Gastrocnemius medialis (tissue), 4 donors: ENCODE measurements at regions of chr6 and their contacts with region 1.

Region 1: DNA sequence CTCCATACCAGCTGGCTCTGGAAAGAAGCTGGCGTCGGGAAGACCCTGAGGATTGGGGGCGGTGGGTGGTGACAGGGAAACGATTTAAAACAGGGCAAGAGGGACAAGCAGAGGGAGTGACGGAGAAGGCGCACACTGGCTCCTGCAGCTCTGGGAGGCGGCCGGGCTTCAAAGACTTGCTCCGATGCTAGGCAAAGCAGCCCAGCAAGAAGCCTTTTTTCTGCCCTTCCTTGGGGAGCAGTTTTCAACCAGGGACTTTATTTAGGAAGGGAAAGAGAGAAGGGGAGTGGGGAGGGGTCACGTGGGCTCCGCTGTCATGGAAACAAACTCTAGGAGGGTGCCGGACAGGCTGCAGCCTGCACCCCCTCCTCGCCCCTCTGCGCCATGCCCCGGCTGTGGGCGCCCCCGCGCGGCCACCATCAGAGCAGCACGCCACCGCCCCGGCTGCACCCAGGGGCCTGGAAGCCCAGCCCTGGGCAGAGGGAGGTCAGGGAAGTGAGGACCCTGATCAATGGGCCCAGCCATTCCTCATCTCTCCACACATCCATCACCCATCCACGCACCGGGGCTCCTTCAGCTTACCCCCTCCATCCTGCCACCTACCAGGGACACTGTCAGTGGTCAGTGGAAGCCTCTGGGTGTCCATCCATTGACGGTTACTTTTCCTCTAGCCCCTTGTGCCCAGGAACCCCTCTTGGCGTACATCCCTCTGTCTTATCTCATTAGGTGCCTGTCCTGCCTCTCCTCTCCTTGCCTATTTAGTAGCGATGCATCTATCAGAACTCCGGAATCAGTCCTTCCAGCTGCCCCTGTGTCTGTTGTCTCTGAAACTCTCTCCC is 66.6 kb upstream of the CCDC167 start:
- DNase-seq: no peak
- ATAC-seq: peak in 1 of 2 donors; percentile 33
- H3K4me3 ChIP-seq: peak overlapping the region; percentile 18 to 54 (median 33)
- H3K27ac ChIP-seq: no peak overlapping the region
- H3K4me1 ChIP-seq: peaks cover 3 to 6% of the 10 kb centered on the region in 2 donors
- H3K27me3 ChIP-seq: peaks cover 8 to 18% (median 13%) of the 10 kb centered on the region in 3 donors
- CTCF ChIP-seq: peak; percentile 27 to 79 (median 69)
- POLR2A ChIP-seq: no peak

Region 2: DNA sequence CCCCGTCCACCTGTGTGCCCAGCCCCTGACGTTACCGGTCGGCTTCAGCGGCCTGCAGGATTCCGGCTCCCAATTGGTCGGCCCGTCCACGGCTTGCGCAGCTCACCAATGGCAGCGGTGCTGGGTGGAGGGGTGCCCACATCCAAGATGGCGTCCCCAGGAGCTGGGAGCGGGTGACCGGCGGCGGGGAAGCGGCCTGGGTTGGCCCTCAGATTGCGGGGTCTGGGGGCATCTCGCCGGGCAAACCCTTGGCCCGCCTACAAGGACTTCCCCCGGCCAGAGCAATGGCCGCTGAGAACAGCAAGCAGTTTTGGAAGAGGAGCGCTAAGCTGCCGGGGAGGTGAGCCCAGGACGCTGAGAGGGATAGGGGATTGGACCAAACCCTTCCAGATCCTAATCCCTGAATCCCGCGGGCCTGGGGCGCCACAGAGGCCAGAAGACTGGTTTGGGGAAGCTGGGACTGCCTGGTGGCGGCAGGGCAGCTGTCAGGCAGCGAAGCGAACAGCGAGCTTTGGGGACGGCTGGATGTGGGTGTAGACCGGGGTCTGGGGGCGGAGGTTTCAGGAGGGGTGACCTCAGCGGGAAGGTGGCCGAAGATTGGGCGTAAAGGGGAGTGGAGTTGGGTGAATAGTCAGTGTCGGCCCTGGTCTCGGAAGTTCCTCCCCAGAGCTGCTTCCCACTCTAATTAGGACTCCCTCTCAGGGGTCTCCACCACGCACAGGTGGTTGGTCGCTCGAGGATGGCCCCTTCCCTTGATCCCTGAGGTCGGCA is 308.5 kb before region 1 on chr6 and contains the starts of genes TBC1D22B and TMEM217:
- in situ Hi-C with region 1: no loop called
- intact Hi-C with region 1: no loop called
- DNase-seq: peak; percentile 96 to 97
- ATAC-seq: peak; percentile 98
- H3K4me3 ChIP-seq: peak within 1 kb of the TSS; percentile 81 to 98 (median 86)
- H3K27ac ChIP-seq: peak within 1 kb of the TSS; percentile 87 to 94 (median 92)
- H3K4me1 ChIP-seq: peaks cover 29 to 41% of the 10 kb centered on the region in 2 donors
- H3K27me3 ChIP-seq: no peaks in the 10 kb centered on the region
- CTCF ChIP-seq: no peak
- POLR2A ChIP-seq: peak; percentile 71 to 80
- total RNA-seq, gene TBC1D22B: 6.3 to 12.3 (median 7.7) TPM
- total RNA-seq, gene TMEM217: 0.22 TPM in 1 of 4 donors, not detected in the others

Region 3: GRCh38 chr6:37324131-37325033 is 241.9 kb before region 1 on chr6:
- in situ Hi-C with region 1: loop called in 1 of 4 experiments (anchors 25 kb)
- intact Hi-C with region 1: no loop called
- DNase-seq: no peak
- ATAC-seq: no peak
- H3K4me3 ChIP-seq: no peak overlapping the region
- H3K27ac ChIP-seq: no peak overlapping the region
- H3K4me1 ChIP-seq: no peaks in the 10 kb centered on the region
- H3K27me3 ChIP-seq: no peaks in the 10 kb centered on the region
- CTCF ChIP-seq: no peak
- POLR2A ChIP-seq: no peak

Region 4: GRCh38 chr6:37483917-37484785 is 82.2 kb before region 1 on chr6:
- in situ Hi-C with region 1: no loop called
- intact Hi-C with region 1: loop called (anchors 10 kb)
- DNase-seq: peak in 1 of 2 donors; percentile 23
- ATAC-seq: peak; percentile 30 to 31
- H3K4me3 ChIP-seq: no peak overlapping the region
- H3K27ac ChIP-seq: no peak overlapping the region
- H3K4me1 ChIP-seq: no peaks in the 10 kb centered on the region
- H3K27me3 ChIP-seq: no peaks in the 10 kb centered on the region
- CTCF ChIP-seq: peak; percentile 26 to 87 (median 69)
- POLR2A ChIP-seq: no peak

Region 5: GRCh38 chr6:37679539-37680476 is 113.5 kb after region 1 on chr6:
- in situ Hi-C with region 1: no loop called
- intact Hi-C with region 1: no loop called
- DNase-seq: peak; percentile 71 to 77
- ATAC-seq: peak; percentile 90 to 98
- H3K4me3 ChIP-seq: no peak overlapping the region
- H3K27ac ChIP-seq: peak overlapping the region in 2 of 4 donors; percentile 18 to 64
- H3K4me1 ChIP-seq: peaks cover 9 to 11% of the 10 kb centered on the region in 2 donors
- H3K27me3 ChIP-seq: no peaks in the 10 kb centered on the region
- CTCF ChIP-seq: no peak
- POLR2A ChIP-seq: no peak

Region 6: DNA sequence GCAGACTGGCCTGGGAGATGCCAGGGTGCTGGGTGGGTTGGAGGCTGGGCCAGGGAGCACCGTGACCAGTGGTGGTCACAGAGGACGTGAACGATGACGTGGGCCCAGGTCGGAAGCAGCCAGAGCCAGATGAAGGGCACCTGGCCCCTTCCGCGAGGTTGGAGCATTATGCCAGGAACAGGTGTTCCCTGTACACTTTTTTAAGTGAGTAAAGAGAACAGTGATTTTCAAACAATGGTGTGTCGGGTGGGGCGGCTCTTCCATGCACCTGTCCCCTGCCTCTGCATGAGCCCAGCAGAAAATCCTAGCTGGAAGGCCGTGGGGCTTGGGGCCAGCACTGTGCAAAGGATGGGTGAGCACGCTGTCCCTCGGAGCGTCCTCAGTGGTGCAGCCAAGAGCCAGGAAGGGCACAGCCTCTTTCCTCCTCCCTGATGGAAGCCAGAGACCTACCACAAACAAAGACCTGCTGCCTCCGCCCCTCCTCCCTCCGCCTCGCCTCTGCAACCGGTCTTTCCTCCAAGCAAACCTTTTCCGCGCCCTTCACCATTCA is 603.7 kb after region 1 on chr6:
- in situ Hi-C with region 1: no loop called
- intact Hi-C with region 1: no loop called
- DNase-seq: no peak
- ATAC-seq: no peak
- H3K4me3 ChIP-seq: no peak overlapping the region
- H3K27ac ChIP-seq: no peak overlapping the region
- H3K4me1 ChIP-seq: no peaks in the 10 kb centered on the region
- H3K27me3 ChIP-seq: no peaks in the 10 kb centered on the region
- CTCF ChIP-seq: no peak
- POLR2A ChIP-seq: no peak